ENCODE measurements at regions of chr6 and their contacts with region 1.

Region 1: GRCh38 chr6:75296811-75297779 is 12.5 kb upstream of the TMEM30A start:
- DNase-seq: peak; percentile 30 to 75 (median 36)
- ATAC-seq: peak; percentile 85
- H3K4me3 ChIP-seq: no peak overlapping the region
- H3K27ac ChIP-seq: no peak overlapping the region
- H3K4me1 ChIP-seq: no peaks in the 10 kb centered on the region
- H3K27me3 ChIP-seq: peaks cover 0 to 1% of the 10 kb centered on the region in 2 experiments; a peak in 2 of 5 replicates
- CTCF ChIP-seq: peak in 2 of 3 experiments; percentile 46 to 81; a peak in 4 of 6 replicates
- EP300 ChIP-seq: no peak
- POLR2A ChIP-seq: no peak
- RAD21 ChIP-seq: peak; percentile 76 to 88

Region 2: DNA sequence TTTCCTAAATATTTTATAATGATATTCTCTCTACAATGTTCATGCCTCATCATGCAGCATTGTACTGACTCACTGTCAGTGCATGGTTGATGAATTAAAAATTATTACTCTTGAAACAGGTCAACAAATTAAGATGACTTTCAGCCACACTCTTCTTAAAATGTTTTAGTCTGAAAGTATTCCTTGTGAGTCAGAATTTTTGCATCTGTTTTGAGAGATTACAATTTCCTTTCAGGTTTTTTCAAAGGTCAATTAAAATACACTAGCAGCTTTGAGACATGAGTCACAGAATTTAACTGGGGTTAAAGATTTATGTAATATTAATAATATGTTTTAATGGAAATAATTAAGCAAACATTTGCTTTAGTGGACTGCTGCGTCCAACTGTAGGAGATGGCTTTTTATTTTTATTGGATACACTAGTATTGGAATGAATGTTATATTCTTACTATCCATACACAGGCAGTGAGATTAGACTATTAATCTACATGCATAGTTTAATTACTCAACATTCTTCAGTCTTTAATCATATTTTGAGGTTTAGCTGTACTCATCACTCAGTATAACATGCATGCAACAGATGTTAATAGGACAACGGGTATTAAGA is 100.9 kb before region 1 on chr6:
- CTCF ChIA-PET with region 1: no interaction called
- POLR2A ChIA-PET with region 1: no interaction called
- in situ Hi-C with region 1: no loop called
- intact Hi-C with region 1: no loop called
- DNase-seq: no peak
- ATAC-seq: no peak
- H3K4me3 ChIP-seq: no peak overlapping the region
- H3K27ac ChIP-seq: no peak overlapping the region
- H3K4me1 ChIP-seq: no peaks in the 10 kb centered on the region
- H3K27me3 ChIP-seq: no peaks in the 10 kb centered on the region
- CTCF ChIP-seq: no peak
- EP300 ChIP-seq: no peak
- POLR2A ChIP-seq: no peak
- RAD21 ChIP-seq: no peak

Region 3: GRCh38 chr6:75266716-75267291 is 30.3 kb before region 1 on chr6:
- CTCF ChIA-PET with region 1: interaction called, 5 read pairs
- POLR2A ChIA-PET with region 1: no interaction called
- in situ Hi-C with region 1: no loop called
- intact Hi-C with region 1: loop called (anchors 1 kb)
- DNase-seq: peak in 3 of 4 experiments; percentile 25 to 48 (median 40)
- ATAC-seq: peak; percentile 86
- H3K4me3 ChIP-seq: no peak overlapping the region
- H3K27ac ChIP-seq: no peak overlapping the region
- H3K4me1 ChIP-seq: no peaks in the 10 kb centered on the region
- H3K27me3 ChIP-seq: no peaks in the 10 kb centered on the region
- CTCF ChIP-seq: peak; percentile 48 to 76 (median 52); a peak in 5 of 6 replicates
- EP300 ChIP-seq: no peak
- POLR2A ChIP-seq: no peak
- RAD21 ChIP-seq: peak; percentile 77 to 78

Region 4: GRCh38 chr6:75368151-75368779 is 71.2 kb after region 1 on chr6:
- CTCF ChIA-PET with region 1: no interaction called
- POLR2A ChIA-PET with region 1: no interaction called
- in situ Hi-C with region 1: no loop called
- intact Hi-C with region 1: loop called (anchors 5 kb)
- DNase-seq: peak in 2 of 4 experiments; percentile 15 to 43
- ATAC-seq: peak; percentile 93
- H3K4me3 ChIP-seq: no peak overlapping the region
- H3K27ac ChIP-seq: no peak overlapping the region
- H3K4me1 ChIP-seq: no peaks in the 10 kb centered on the region
- H3K27me3 ChIP-seq: no peaks in the 10 kb centered on the region
- CTCF ChIP-seq: peak; percentile 46 to 52 (median 47)
- EP300 ChIP-seq: no peak
- POLR2A ChIP-seq: no peak
- RAD21 ChIP-seq: peak; percentile 30 to 64

Region 5: DNA sequence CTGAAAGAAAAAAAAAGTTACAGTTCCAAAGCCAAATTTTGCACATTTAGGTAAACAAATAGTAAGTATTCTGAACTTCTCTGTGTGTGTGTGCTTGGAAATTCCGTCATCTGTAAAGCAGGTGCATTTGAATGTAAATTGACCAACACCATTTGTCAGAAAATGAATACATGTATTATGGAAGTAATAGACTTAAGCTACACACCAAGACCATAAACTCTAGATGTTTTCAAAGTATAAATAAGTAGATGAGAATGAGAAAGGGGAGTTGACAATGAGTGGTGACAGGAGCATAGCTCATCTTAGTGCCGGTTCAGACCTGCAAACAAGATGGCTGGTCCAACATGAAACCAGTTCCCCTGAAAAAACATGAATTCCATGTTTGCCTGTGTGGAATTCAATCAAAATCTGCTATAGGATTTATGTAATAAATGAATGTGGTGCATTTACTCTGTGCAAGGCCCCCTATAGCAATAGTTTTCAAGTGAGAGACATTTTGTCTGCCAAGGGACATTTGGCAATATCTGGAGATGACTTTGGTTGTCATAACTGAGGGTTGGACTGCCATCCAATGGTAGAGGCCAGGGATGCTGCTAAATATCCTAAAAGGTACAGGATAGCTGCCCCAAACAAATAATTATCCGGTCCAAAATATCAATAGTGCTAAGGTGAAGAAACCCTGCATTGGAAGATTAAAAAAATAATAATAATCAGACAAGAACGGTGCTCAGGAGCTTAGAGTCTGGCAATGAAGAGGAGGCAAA is 207.6 kb after region 1 on chr6:
- CTCF ChIA-PET with region 1: no interaction called
- POLR2A ChIA-PET with region 1: no interaction called
- in situ Hi-C with region 1: loop called (anchors 10 kb)
- intact Hi-C with region 1: no loop called
- DNase-seq: no peak
- ATAC-seq: 0 out of 3 replicates have a peak, but pooled peaks have one; percentile 42
- H3K4me3 ChIP-seq: no peak overlapping the region
- H3K27ac ChIP-seq: no peak overlapping the region
- H3K4me1 ChIP-seq: no peaks in the 10 kb centered on the region
- H3K27me3 ChIP-seq: 0 out of 5 replicates have a peak, but pooled peaks cover 0 to 2% of the 10 kb centered on the region in 2 experiments
- CTCF ChIP-seq: peak in 1 of 3 experiments; percentile 33; a peak in 1 of 6 replicates
- EP300 ChIP-seq: no peak
- POLR2A ChIP-seq: no peak
- RAD21 ChIP-seq: peak in 1 of 2 experiments; percentile 51; a peak in 3 of 4 replicates

Measured in K562 (cell line).